Thyroid gland (tissue), 4 donors: ENCODE measurements at regions of chr11 and their contacts with region 1.

Region 1: DNA sequence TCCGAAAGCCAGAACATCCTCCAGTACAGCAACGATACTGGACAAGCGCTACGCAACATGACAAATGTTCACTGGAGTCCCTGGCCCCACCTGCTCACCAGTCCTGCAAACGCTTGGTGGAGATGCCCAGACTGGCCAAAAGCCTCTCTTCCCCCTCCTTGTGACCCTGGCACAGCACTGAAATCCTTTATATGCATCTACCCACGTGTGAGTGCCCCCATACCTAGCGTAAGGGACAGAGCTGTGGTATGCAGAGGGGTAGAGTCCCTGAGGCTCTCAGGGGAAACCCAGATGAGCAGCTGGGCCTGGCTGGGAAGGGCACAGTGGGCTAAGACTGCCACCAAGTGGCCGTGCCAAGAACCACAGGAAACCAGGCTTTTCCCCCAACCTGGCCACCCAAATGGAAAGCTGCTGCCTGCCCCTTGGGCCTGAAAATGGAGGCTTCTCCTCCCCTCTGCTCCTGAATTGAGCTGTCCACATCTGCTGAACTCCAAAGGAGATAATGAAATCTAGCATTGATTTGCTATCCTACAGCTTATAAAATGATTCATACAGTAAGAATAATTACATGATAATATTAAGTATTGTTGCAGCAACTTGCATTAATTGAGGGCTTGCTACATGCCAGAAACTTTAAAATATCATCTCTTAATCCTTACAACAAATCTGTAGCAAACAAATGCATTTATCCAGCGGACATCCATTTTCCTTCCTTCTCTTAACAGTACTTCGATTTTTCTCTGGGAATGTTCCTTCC is 24.8 kb upstream of the TTC12 start:
- DNase-seq: peak; percentile 52 to 62
- H3K4me3 ChIP-seq: no peak overlapping the region
- H3K27ac ChIP-seq: no peak overlapping the region
- H3K4me1 ChIP-seq: no peaks in the 10 kb centered on the region
- H3K27me3 ChIP-seq: no peaks in the 10 kb centered on the region
- CTCF ChIP-seq: peak; percentile 77 to 94 (median 86)
- POLR2A ChIP-seq: no peak

Region 2: GRCh38 chr11:112590764-112591163 is 698.8 kb before region 1 on chr11:
- intact Hi-C with region 1: loop called (anchors 2 kb)
- DNase-seq: no peak
- H3K4me3 ChIP-seq: no peak overlapping the region
- H3K27ac ChIP-seq: no peak overlapping the region
- H3K4me1 ChIP-seq: no peaks in the 10 kb centered on the region
- H3K27me3 ChIP-seq: no peaks in the 10 kb centered on the region
- CTCF ChIP-seq: no peak
- POLR2A ChIP-seq: no peak

Region 3: GRCh38 chr11:113587308-113587739 is 297.7 kb after region 1 on chr11:
- intact Hi-C with region 1: no loop called
- DNase-seq: no peak
- H3K4me3 ChIP-seq: no peak overlapping the region
- H3K27ac ChIP-seq: no peak overlapping the region
- H3K4me1 ChIP-seq: no peaks in the 10 kb centered on the region
- H3K27me3 ChIP-seq: no peaks in the 10 kb centered on the region
- CTCF ChIP-seq: no peak
- POLR2A ChIP-seq: no peak